Right ventricle myocardium inferior (tissue), 1 donor: ENCODE measurements at regions of chr1 and their contacts with region 1.

Region 1: DNA sequence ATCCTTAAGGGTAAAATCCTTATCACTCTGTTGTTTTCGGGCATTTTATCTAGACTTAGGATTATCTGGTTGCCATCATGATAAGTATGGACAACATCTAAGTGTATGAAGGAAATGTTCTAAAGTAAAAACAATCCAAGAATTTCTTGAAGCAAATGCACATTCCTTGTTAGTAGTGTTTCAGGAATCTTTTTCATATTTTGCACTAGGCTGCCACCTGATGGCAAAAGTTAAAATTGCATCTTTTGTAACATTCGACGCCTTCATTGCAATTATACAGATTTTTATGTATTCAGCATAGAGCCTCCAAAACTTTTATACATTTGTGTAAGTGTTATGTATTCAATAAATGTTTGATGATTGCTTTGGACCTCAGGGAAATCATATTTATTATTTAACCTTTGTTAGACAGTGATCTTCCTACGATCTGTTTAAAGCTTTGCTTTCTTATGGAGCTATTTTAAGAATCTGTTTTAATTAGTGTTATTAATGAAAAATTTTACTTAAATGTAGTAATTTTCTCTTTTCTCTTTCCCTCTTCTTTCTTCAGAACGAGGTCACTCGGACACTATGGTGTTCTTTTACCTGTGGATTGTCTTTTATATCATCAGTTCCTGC is 49.4 kb upstream of the KIAA1614 start:
- DNase-seq: no peak
- ATAC-seq: no peak

Region 2: DNA sequence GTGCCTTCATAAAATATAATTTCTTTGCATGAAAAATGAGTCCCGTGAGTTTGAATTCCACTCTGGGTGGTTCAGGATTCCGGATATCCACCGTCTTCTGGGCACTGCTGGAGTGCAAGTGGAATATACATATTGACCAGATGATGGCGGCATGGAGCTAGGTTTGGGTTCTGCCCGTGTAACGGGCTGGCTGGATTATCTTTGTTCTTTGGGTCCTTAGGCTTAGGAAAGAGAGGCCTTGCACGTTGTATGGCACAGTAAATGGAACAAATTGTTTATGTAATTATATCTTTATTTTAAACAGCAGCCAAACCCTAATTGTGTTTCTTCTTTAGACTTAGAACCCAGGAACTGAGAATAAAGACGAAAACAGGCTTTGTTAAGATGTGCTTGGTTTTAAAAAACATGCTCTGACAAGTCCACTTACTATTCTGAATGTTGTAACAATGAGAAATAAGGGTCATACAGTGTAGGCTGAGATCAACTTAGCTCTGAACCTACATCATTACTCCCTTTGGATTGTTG is 347.3 kb before region 1 on chr1:
- intact Hi-C with region 1: loop called (anchors 5 kb)
- DNase-seq: no peak
- ATAC-seq: peak; percentile 95

Region 3: GRCh38 chr1:180533266-180533987 is 329.8 kb before region 1 on chr1:
- intact Hi-C with region 1: loop called (anchors 5 kb)
- DNase-seq: no peak
- ATAC-seq: peak; percentile 75